ENCODE measurements at regions of chr10 and their contacts with region 1.

Region 1: GRCh38 chr10:93702211-93703001 is at the start of gene FRA10AC1:
- DNase-seq: peak; percentile 95
- ATAC-seq: peak; percentile 86
- H3K4me3 ChIP-seq: peak within 1 kb of the TSS; percentile 79 to 98 (median 91)
- H3K4me3 Mint-ChIP-seq: no peak within 1 kb of the TSS
- H3K27ac ChIP-seq: peak within 1 kb of the TSS; percentile 64 to 92
- H3K27ac Mint-ChIP-seq: no peak within 1 kb of the TSS
- H3K4me1 ChIP-seq: peaks cover 11% of the 10 kb centered on the region in 2 donors
- H3K4me1 Mint-ChIP-seq: peaks cover 9% of the 10 kb centered on the region
- H3K27me3 ChIP-seq: no peaks in the 10 kb centered on the region
- H3K27me3 Mint-ChIP-seq: no peaks in the 10 kb centered on the region
- CTCF ChIP-seq: no peak
- total RNA-seq, gene FRA10AC1: 29.7 and 31.2 TPM in 2 replicates

Region 2: GRCh38 chr10:92290837-92291615 is 1411.4 kb before region 1 on chr10 and contains the starts of genes CPEB3 and MARCHF5:
- CTCF ChIA-PET with region 1: no interaction called
- POLR2A ChIA-PET with region 1: no interaction called
- intact Hi-C with region 1: loop called (anchors 5 kb)
- DNase-seq: peak; percentile 96
- ATAC-seq: peak; percentile 97
- H3K4me3 ChIP-seq: peak within 1 kb of the TSS; percentile 57 to 99 (median 85)
- H3K4me3 Mint-ChIP-seq: peak within 1 kb of the TSS; percentile 95
- H3K27ac ChIP-seq: peak within 1 kb of the TSS; percentile 62 to 88
- H3K27ac Mint-ChIP-seq: peak within 1 kb of the TSS; percentile 91
- H3K4me1 ChIP-seq: peaks cover 9 to 20% of the 10 kb centered on the region in 2 donors
- H3K4me1 Mint-ChIP-seq: peaks cover 29% of the 10 kb centered on the region
- H3K27me3 ChIP-seq: no peaks in the 10 kb centered on the region
- H3K27me3 Mint-ChIP-seq: no peaks in the 10 kb centered on the region
- CTCF ChIP-seq: peak; percentile 68
- total RNA-seq, gene CPEB3: 5.0 and 6.7 TPM in 2 replicates
- total RNA-seq, gene MARCHF5: 25.9 and 27.8 TPM in 2 replicates

Region 3: GRCh38 chr10:93496322-93497041 is 205.9 kb before region 1 on chr10 and contains the start of gene CEP55:
- CTCF ChIA-PET with region 1: no interaction called
- POLR2A ChIA-PET with region 1: no interaction called
- intact Hi-C with region 1: loop called (anchors 1 kb)
- DNase-seq: peak; percentile 94
- ATAC-seq: peak; percentile 99
- H3K4me3 ChIP-seq: peak within 1 kb of the TSS; percentile 67 to 97 (median 81)
- H3K4me3 Mint-ChIP-seq: peak within 1 kb of the TSS; percentile 93
- H3K27ac ChIP-seq: peak within 1 kb of the TSS in 1 of 2 donors; percentile 44
- H3K27ac Mint-ChIP-seq: peak within 1 kb of the TSS; percentile 67
- H3K4me1 ChIP-seq: peaks cover 8 to 16% of the 10 kb centered on the region in 2 donors
- H3K4me1 Mint-ChIP-seq: peaks cover 15% of the 10 kb centered on the region
- H3K27me3 ChIP-seq: peaks cover 0 to 4% (median 1%) of the 10 kb centered on the region in 4 experiments
- H3K27me3 Mint-ChIP-seq: peaks cover 8% of the 10 kb centered on the region
- CTCF ChIP-seq: no peak
- total RNA-seq, gene CEP55: 0.19 and 0.27 TPM in 2 replicates

Region 4: DNA sequence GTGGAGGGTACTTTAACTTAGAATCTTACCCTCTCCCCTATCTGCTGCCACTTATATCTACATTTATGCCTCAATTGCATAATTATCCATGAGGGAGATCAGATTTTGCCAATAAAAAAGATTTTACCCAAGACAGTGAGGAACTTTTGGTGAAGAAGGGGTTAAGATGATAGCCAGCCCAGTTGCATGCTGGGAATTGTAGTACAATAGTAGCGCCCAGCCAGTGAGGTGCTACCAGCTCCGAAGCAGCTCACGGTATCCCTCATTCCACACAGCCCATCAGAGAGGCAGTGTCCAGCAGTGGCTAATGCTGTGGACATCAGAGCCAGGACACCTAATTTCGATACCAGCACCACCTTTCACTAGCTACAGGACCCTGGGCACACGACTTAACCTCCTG is 49.4 kb after region 1 on chr10:
- CTCF ChIA-PET with region 1: interaction called, 4 read pairs
- POLR2A ChIA-PET with region 1: interaction called, 3 read pairs
- intact Hi-C with region 1: loop called (anchors 2 kb)
- DNase-seq: peak; percentile 26
- ATAC-seq: peak; percentile 65
- H3K4me3 ChIP-seq: peak overlapping the region in 3 of 5 experiments; percentile 16 to 28 (median 23)
- H3K4me3 Mint-ChIP-seq: peak overlapping the region; percentile 68
- H3K27ac ChIP-seq: no peak overlapping the region
- H3K27ac Mint-ChIP-seq: no peak overlapping the region
- H3K4me1 ChIP-seq: peaks cover 6 to 10% of the 10 kb centered on the region in 2 donors
- H3K4me1 Mint-ChIP-seq: peaks cover 13% of the 10 kb centered on the region
- H3K27me3 ChIP-seq: peaks cover 0 to 11% (median 3%) of the 10 kb centered on the region in 4 experiments
- H3K27me3 Mint-ChIP-seq: peaks cover 48% of the 10 kb centered on the region
- CTCF ChIP-seq: no peak

Region 5: DNA sequence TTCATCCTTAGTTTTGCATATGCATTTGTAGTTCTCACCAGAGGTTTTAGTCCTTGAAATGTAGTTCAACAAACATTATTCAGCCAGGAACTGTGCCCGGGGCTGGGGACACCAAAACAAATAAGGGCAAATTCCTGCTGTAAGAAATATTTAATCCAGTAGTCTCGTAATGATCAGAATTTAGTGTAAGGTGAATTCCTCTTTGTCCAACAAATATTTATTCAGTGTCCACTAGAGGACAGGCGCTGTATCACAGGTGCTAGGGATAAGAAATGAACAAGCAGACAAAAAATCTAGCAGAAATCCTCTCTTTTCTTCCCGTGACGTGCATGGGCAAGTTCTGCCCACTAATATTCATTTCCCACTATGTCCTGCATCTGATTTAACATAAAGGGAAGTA is 73.0 kb after region 1 on chr10:
- CTCF ChIA-PET with region 1: no interaction called
- POLR2A ChIA-PET with region 1: no interaction called
- intact Hi-C with region 1: no loop called
- DNase-seq: no peak
- ATAC-seq: no peak
- H3K4me3 ChIP-seq: no peak overlapping the region
- H3K4me3 Mint-ChIP-seq: no peak overlapping the region
- H3K27ac ChIP-seq: no peak overlapping the region
- H3K27ac Mint-ChIP-seq: no peak overlapping the region
- H3K4me1 ChIP-seq: no peaks in the 10 kb centered on the region
- H3K4me1 Mint-ChIP-seq: no peaks in the 10 kb centered on the region
- H3K27me3 ChIP-seq: peaks cover 0 to 8% (median 2%) of the 10 kb centered on the region in 4 experiments
- H3K27me3 Mint-ChIP-seq: peaks cover 22% of the 10 kb centered on the region
- CTCF ChIP-seq: no peak

Region 6: GRCh38 chr10:93893646-93894515 is 191.5 kb after region 1 on chr10 and contains the start of gene SLC35G1:
- CTCF ChIA-PET with region 1: no interaction called
- POLR2A ChIA-PET with region 1: no interaction called
- intact Hi-C with region 1: loop called (anchors 10 kb)
- DNase-seq: peak; percentile 83
- ATAC-seq: peak; percentile 93
- H3K4me3 ChIP-seq: peak within 1 kb of the TSS; percentile 39 to 76 (median 61)
- H3K4me3 Mint-ChIP-seq: peak within 1 kb of the TSS; percentile 88
- H3K27ac ChIP-seq: no peak within 1 kb of the TSS
- H3K27ac Mint-ChIP-seq: peak within 1 kb of the TSS; percentile 39
- H3K4me1 ChIP-seq: peaks cover 6 to 11% of the 10 kb centered on the region in 2 donors
- H3K4me1 Mint-ChIP-seq: peaks cover 23% of the 10 kb centered on the region
- H3K27me3 ChIP-seq: no peaks in the 10 kb centered on the region
- H3K27me3 Mint-ChIP-seq: peaks cover 11% of the 10 kb centered on the region
- CTCF ChIP-seq: no peak
- total RNA-seq, gene SLC35G1: 2.6 and 2.8 TPM in 2 replicates

Region 7: DNA sequence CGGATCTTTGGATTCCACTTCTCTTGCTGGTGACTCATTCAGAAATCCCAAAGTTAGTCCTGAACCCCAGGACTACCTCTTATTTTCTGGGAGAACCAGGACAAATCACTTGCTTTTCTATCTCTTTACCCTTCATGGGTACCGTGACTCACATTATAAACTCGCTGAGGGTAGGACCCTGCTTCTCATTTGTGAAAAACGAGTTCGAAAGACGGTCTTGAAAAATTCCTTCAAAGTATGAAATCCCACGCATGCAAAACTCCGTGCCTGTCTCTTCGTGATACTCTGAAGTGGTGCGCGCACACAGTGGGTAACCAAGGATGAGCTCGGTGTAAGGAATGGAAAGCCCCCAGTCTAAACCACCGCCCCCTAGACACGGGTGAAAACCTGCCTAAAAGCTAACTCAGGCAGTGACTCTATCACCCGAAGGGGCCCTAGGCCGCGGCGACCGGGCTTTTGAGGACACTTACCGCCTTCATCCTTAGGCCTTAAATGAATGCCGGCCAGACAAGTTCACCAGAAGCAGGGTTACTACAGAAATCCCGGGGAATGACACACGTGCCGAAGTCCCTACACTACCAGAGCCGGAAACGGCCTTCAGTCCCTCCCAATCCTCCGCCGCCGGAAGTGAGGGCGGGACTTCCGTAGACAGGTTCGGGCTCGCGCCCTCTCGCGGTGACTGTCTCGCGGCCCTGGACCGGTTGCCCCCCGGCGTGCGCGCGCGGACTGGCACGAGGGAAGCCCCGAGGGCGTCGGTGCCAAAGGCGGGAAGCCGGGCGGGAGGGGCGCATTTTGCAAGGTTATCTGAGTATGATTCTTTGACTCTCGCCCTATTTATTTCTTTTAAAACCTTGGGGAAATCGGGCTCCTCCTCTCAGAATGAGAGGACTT is 660.2 kb after region 1 on chr10 and contains the start of gene NOC3L:
- CTCF ChIA-PET with region 1: no interaction called
- POLR2A ChIA-PET with region 1: no interaction called
- intact Hi-C with region 1: loop called (anchors 2 kb)
- DNase-seq: peak; percentile 98
- ATAC-seq: peak; percentile 97
- H3K4me3 ChIP-seq: peak within 1 kb of the TSS; percentile 66 to 95 (median 86)
- H3K4me3 Mint-ChIP-seq: peak within 1 kb of the TSS; percentile 98
- H3K27ac ChIP-seq: peak within 1 kb of the TSS; percentile 94 to 95
- H3K27ac Mint-ChIP-seq: peak within 1 kb of the TSS; percentile 98
- H3K4me1 ChIP-seq: peaks cover 16 to 18% of the 10 kb centered on the region in 2 donors
- H3K4me1 Mint-ChIP-seq: peaks cover 36% of the 10 kb centered on the region
- H3K27me3 ChIP-seq: peaks cover 0 to 5% (median 2%) of the 10 kb centered on the region in 4 experiments
- H3K27me3 Mint-ChIP-seq: peaks cover 11% of the 10 kb centered on the region
- CTCF ChIP-seq: peak; percentile 92
- total RNA-seq, gene NOC3L: 37.5 and 42.0 TPM in 2 replicates

Measured in B cell (primary cell).